Body of pancreas (tissue), 4 donors: ENCODE measurements at regions of chr1 and their contacts with region 1.

Region 1: DNA sequence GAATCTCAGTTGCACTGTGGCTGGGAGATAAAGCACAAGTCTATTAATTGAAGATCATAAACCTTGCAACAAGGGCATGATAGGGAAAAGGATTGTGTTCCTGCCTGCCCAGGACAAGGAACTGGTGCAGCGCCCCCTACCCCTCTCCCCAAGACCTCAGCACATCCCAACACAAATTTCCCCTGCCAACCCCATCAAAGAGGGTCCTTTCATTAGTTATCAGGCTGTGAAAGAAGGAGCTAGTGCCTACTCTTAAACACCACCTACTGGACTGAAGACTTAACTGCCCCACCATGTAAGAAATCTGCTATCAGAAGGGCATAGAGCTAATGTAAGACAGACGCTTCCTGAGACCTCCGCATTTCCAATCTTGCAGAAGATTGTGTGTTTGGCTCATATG is 372.6 kb downstream of the AGBL4 start:
- DNase-seq: no peak
- ATAC-seq: no peak
- H3K4me3 ChIP-seq: no peak overlapping the region
- H3K27ac ChIP-seq: no peak overlapping the region
- H3K4me1 ChIP-seq: no peaks in the 10 kb centered on the region
- H3K27me3 ChIP-seq: no peaks in the 10 kb centered on the region
- CTCF ChIP-seq: no peak
- POLR2A ChIP-seq: no peak

Region 2: DNA sequence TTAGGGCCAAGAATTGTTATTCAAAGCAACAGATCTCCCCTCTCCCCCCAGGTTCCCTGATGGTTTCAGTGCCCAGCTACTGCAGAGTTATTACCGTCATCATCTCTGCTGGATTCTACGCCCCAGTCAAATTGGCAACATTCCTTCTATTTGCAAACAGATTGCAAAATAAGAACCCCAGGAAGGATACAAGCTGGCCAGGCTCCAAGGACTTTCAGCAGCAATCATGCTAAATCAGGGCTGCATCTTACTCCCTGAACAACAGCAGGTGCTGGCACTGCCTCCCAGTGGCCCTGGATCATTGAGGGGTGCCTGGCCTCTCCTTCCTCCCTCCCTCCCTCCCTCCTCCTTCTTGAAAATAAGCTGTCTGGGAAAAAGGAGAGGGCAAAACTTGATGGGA is 352.8 kb before region 1 on chr1:
- intact Hi-C with region 1: loop called (anchors 5 kb)
- DNase-seq: peak; percentile 40 to 65 (median 60)
- ATAC-seq: peak; percentile 48
- H3K4me3 ChIP-seq: no peak overlapping the region
- H3K27ac ChIP-seq: no peak overlapping the region
- H3K4me1 ChIP-seq: no peaks in the 10 kb centered on the region
- H3K27me3 ChIP-seq: no peaks in the 10 kb centered on the region
- CTCF ChIP-seq: no peak
- POLR2A ChIP-seq: no peak